AG04450 (cell line): ENCODE measurements at regions of chr1 and their contacts with region 1.

Region 1: GRCh38 chr1:20633190-20634064 is at the start of gene PINK1:
- DNase-seq: no peak
- H3K4me3 ChIP-seq: peak within 1 kb of the TSS; percentile 79
- H3K27ac ChIP-seq: peak within 1 kb of the TSS; percentile 11
- H3K27me3 ChIP-seq: no peaks in the 10 kb centered on the region
- CTCF ChIP-seq: peak; percentile 91
- polyA plus RNA-seq, gene PINK1: 43.8 and 49.0 TPM in 2 replicates

Region 2: GRCh38 chr1:20454004-20454403 is 179.4 kb before region 1 on chr1:
- CTCF ChIA-PET with region 1: no interaction called
- POLR2A ChIA-PET with region 1: no interaction called
- DNase-seq: no peak
- H3K4me3 ChIP-seq: no peak overlapping the region
- H3K27ac ChIP-seq: no peak overlapping the region
- H3K27me3 ChIP-seq: peaks cover 31% of the 10 kb centered on the region
- CTCF ChIP-seq: no peak

Region 3: DNA sequence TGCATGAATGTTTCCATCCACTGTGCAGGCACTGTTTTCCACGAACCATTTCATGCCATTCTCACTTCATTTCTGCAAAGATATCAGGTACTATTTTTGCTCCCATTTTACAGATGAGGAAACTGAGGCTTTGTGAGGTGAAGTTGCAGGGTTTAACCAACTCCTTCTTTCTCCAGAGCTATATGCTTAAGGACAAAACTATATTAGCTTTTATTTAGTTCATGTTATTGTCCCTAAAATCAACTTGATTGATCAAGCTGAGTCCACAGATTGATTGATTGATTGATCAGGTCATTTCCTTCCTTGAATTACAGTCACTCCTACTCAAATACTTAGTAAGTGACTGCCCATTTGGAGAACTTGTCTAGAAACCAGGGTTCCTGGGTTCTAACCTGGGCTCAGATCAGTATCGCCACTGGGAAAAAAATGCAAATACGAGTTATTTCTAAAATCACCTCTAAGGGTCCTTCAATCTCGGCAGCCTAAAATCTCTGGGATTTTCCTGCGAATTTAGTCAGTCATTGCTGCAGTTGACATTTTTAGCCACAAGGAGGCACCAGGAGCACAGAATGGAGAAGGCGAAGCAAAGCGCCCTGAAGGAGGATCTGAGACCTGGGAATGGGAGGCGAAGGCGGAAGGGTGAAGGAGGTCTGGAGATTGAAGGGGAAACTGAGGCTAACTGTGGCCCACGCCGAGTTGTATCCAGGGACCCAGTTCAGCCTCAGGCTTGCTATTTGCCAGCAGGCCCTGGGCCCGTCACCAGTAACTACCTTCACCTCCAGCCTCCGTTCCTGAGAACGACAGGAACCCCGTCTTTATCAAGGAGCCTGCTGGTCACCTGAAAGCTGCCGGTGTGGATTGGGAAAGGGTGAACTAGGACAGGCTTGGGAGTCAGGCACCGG is 111.2 kb before region 1 on chr1:
- CTCF ChIA-PET with region 1: interaction called, 116 read pairs
- POLR2A ChIA-PET with region 1: interaction called, 3 read pairs
- DNase-seq: peak; percentile 39
- H3K4me3 ChIP-seq: no peak overlapping the region
- H3K27ac ChIP-seq: no peak overlapping the region
- H3K27me3 ChIP-seq: peaks cover 5% of the 10 kb centered on the region
- CTCF ChIP-seq: peak; percentile 98

Region 4: DNA sequence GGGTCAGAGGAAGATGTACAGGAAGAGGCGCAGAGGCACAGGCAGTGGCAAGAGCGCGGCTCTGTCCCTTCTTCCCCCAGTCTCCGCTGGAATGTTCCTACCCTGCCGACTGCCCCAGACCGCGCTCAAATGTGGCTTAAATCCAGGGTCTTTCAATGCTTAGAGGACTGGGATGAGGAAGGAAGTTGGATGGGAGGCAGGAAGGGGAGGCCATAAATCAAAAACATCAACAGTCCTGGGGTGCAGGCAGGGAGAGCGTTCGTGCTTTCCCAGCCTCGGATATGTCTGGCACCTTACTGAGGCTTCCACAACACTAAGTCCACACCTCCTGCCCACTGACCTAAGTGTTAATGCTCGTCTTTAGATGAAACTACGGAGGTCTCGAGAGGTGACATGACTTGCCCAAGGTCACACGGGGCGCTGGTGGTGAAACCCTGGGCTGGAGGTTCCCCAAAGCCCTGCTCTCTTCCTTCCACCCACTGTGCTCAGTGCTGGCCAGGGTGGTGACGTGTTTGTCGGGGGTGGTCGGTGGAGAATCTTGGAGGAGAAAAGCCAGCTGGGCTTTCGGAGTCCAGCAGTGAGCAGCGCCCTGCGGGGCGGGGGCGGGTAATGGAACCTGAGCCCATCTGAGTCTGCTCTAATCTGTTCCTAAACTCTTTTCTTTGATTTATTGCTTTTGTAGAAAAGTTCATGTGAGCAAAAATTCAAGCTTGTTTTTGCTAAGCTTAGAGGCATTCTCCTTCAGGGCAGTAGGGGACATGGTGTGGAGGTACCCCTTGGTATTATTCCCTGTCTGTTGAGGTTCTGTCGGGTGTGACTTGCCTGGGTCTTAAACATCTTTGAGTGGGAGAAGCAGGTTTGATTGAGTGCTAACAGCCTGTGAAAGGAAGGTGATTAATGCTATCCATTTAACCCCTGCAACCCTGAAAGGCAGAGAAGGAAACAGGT is 43.8 kb before region 1 on chr1:
- CTCF ChIA-PET with region 1: interaction called, 13 read pairs
- POLR2A ChIA-PET with region 1: interaction called, 5 read pairs
- DNase-seq: peak; percentile 78
- H3K4me3 ChIP-seq: peak overlapping the region; percentile 43
- H3K27ac ChIP-seq: peak overlapping the region; percentile 85
- H3K27me3 ChIP-seq: no peaks in the 10 kb centered on the region
- CTCF ChIP-seq: no peak

Region 5: GRCh38 chr1:20615946-20616846 is 17.2 kb before region 1 on chr1:
- CTCF ChIA-PET with region 1: interaction called, 22 read pairs
- POLR2A ChIA-PET with region 1: interaction called, 5 read pairs
- DNase-seq: no peak
- H3K4me3 ChIP-seq: 0 out of 2 replicates have a peak overlapping the region, but pooled peaks have one; percentile 13
- H3K27ac ChIP-seq: peak overlapping the region; percentile 47
- H3K27me3 ChIP-seq: no peaks in the 10 kb centered on the region
- CTCF ChIP-seq: no peak